ENCODE measurements at regions of chr20 and their contacts with region 1.

Region 1: DNA sequence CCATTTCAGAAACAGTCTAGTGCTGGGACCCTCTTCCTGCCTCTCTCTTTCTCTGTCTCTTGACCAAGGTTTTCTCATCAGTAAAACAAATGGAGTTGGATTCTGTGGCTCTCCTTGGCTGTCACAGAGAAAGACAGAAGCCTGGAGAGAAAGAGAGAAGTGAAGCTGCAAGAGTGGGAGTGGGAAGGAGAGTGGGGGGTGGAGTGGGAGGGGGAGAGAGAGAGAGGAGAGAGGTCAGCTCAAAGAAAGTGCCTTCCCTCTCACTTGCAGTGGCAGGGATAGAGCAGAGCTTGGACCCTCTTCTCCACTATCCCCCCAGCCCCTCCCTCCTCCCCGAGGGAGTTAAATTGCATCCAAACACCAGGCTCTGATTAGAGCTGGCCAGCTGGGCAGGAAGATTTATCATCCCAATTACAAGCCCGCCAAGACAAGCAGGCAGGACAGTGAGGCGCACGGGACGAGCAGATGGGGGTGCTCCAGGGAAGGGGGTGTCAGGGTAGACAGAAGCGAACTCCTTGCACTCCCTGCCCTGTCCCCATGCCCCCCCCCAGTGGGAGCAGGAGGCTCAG is 74.3 kb downstream of the CD40 start:
- DNase-seq: no peak
- H3K4me3 ChIP-seq: no peak overlapping the region
- CTCF ChIP-seq: no peak

Region 2: GRCh38 chr20:46132705-46133120 is 59.7 kb before region 1 on chr20:
- in situ Hi-C with region 1: no loop called
- DNase-seq: peak; percentile 23
- H3K4me3 ChIP-seq: no peak overlapping the region
- CTCF ChIP-seq: peak; percentile 87

Region 3: DNA sequence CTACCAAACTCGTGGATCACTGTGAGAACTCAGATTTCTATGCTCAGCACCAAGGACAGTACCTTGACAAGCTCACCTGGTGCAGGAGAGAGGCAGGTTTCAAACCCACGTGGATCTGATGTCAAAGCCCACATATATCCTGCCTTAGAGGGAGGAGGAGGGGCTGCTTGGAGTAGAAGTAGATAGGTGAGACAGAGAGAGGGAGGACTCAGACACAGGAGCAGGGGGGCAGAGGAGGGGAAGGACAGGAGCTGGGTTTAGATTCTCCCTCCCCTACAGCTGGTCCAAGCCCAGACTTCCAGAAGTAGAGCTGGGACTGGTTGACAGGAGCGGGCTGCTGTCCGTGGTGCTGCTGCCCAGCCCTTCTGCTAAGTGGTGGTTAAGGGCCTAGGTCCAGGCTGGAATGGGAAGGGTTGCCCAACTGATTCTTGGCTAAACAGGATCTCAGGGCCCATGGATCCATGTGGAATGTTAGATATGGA is 38.4 kb after region 1 on chr20:
- in situ Hi-C with region 1: no loop called
- DNase-seq: peak; percentile 12
- H3K4me3 ChIP-seq: no peak overlapping the region
- CTCF ChIP-seq: no peak

Region 4: GRCh38 chr20:46270977-46271744 is 78.7 kb after region 1 on chr20:
- in situ Hi-C with region 1: loop called (anchors 5 kb)
- DNase-seq: no peak
- H3K4me3 ChIP-seq: no peak overlapping the region
- CTCF ChIP-seq: no peak

Region 5: GRCh38 chr20:46857061-46857831 is 664.8 kb after region 1 on chr20:
- in situ Hi-C with region 1: no loop called
- DNase-seq: no peak
- H3K4me3 ChIP-seq: no peak overlapping the region
- CTCF ChIP-seq: no peak